ENCODE measurements at regions of chr14 and their contacts with region 1.

Region 1: DNA sequence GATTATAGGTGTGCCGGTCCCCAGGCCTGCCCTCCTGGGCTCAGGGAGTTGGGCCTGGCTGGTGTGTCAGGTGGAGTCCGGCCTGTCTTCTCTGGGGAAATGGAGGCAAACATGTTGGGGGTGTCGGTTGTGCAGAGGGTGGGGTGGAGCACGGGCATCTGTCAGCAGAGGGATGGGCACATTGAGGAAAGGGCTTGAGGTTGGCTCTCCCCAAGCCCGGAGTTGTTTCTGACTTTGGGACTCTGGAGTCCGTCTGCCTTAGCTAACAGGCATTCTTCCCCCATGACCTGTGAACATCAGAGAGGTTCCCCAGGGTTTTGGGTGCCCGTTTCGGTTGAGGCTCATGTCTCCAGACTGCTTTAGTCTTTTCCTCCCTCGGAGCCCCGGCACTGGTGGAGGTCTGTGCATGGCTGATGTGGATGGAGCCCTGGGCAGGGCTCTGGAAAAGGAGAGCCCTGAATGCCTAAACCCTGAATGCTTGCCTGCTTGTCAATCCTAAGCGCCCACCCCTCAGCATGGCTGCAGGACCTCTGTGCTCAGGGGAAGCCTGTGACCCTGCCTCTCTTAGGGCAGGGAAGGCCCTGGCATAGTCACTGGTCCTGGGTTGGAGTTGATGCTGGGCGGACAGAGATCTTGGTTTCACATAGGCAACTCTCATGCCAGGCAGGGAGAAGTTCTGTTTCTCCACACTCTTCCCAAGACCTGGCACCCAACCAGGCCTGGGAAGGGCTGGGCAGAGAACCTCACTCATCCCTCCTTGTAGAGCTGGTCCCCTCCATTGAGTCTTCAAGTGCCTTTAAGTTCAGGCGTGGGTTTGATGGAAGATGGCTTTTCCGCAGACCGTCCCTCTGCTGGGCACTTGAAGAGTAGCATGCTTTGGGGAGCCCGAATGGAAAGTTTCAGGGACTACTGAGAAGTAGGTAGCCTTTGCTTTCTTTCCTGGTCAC is 12.9 kb downstream of the NYNRIN start:
- DNase-seq: no peak
- ATAC-seq: peak; percentile 53 to 62
- H3K4me3 ChIP-seq: no peak overlapping the region
- H3K27ac ChIP-seq: no peak overlapping the region
- H3K4me1 ChIP-seq: no peaks in the 10 kb centered on the region
- H3K27me3 ChIP-seq: no peaks in the 10 kb centered on the region
- CTCF ChIP-seq: peak; percentile 74

Region 2: GRCh38 chr14:24351517-24351916 is 60.2 kb before region 1 on chr14:
- intact Hi-C with region 1: no loop called
- DNase-seq: no peak
- ATAC-seq: peak; percentile 51 to 65
- H3K4me3 ChIP-seq: no peak overlapping the region
- H3K27ac ChIP-seq: peak overlapping the region; percentile 43
- H3K4me1 ChIP-seq: peaks cover 19% of the 10 kb centered on the region
- H3K27me3 ChIP-seq: no peaks in the 10 kb centered on the region
- CTCF ChIP-seq: no peak

Region 3: DNA sequence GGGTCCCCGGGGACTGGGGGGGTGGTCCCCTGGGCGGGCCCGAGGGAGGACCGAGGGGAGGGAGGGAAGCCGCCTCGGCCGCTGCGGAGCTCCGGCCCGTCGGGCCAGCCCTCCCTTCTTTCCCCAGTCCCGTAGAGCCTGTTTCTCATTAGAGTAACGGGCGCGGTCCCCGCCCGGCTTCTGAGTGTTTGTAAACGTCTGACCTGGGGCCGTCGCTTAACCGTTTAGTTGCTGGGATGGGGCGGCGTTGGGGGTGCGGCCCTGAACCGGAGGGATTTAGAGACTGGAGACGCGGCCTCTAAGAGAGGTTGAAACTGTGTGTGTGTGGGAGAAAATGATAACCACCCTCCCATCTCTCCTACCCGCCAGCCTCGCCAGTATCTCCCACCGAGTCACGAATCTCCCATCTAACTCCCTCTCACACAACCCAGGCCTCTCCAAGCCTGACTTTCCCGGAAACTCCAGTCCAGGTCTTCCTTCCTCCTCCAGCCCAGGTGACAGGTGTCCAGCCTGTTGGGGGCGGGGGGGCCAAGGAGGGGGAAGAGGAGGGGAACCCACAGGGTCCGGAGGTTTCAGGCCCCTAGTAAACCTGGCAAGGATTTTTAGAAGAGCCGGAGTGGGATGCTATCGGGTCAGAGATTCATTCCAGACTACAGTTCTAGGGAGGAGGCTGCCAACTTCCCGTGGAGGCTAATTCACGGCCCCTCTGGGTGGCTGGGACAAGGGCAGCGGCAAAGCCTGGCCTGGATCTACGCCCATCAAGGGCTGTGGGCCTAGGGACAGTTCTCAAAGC is 44.8 kb before region 1 on chr14:
- intact Hi-C with region 1: loop called (anchors 10 kb)
- DNase-seq: peak; percentile 94
- ATAC-seq: peak; percentile 91 to 92
- H3K4me3 ChIP-seq: peak overlapping the region; percentile 54
- H3K27ac ChIP-seq: peak overlapping the region; percentile 85
- H3K4me1 ChIP-seq: peaks cover 31% of the 10 kb centered on the region
- H3K27me3 ChIP-seq: peaks cover 17% of the 10 kb centered on the region
- CTCF ChIP-seq: no peak